ENCODE measurements at regions of chr2 and their contacts with region 1.

Region 1: GRCh38 chr2:196076778-196077568 is 8.3 kb upstream of the DNAH7 start:
- DNase-seq: no peak
- ATAC-seq: no peak
- H3K4me3 Mint-ChIP-seq: no peak overlapping the region
- H3K27ac Mint-ChIP-seq: no peak overlapping the region
- H3K4me1 Mint-ChIP-seq: peaks cover 20% of the 10 kb centered on the region
- H3K27me3 Mint-ChIP-seq: no peaks in the 10 kb centered on the region

Region 2: GRCh38 chr2:196131384-196131937 is 54.5 kb after region 1 on chr2:
- CTCF ChIA-PET with region 1: interaction called, 11 read pairs
- POLR2A ChIA-PET with region 1: no interaction called
- DNase-seq: peak; percentile 81
- ATAC-seq: peak; percentile 55
- H3K4me3 Mint-ChIP-seq: no peak overlapping the region
- H3K27ac Mint-ChIP-seq: peak overlapping the region; percentile 81
- H3K4me1 Mint-ChIP-seq: peaks cover 34% of the 10 kb centered on the region
- H3K27me3 Mint-ChIP-seq: no peaks in the 10 kb centered on the region

Region 3: DNA sequence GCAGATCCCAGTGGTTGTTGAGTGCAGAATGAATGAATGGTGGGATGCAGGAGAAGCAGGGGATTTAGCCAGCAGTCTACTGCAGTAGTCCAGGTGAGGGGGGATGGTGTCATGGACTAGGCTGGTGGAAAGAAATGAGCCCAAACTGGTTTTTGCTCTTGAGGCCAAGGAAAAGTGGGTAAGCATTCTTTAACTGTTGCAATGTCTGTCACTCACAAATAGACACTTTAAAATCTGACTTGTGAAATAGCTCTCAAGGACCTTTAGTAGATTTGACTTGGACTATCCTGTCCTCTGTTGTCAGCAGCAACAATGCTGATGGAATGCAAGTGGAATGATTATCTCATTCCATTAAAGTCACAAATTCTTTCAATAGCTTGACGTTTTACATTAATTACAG is 131.9 kb after region 1 on chr2:
- CTCF ChIA-PET with region 1: no interaction called
- POLR2A ChIA-PET with region 1: no interaction called
- DNase-seq: no peak
- ATAC-seq: no peak
- H3K4me3 Mint-ChIP-seq: no peak overlapping the region
- H3K27ac Mint-ChIP-seq: peak overlapping the region; percentile 77
- H3K4me1 Mint-ChIP-seq: peaks cover 71% of the 10 kb centered on the region
- H3K27me3 Mint-ChIP-seq: no peaks in the 10 kb centered on the region

Region 4: DNA sequence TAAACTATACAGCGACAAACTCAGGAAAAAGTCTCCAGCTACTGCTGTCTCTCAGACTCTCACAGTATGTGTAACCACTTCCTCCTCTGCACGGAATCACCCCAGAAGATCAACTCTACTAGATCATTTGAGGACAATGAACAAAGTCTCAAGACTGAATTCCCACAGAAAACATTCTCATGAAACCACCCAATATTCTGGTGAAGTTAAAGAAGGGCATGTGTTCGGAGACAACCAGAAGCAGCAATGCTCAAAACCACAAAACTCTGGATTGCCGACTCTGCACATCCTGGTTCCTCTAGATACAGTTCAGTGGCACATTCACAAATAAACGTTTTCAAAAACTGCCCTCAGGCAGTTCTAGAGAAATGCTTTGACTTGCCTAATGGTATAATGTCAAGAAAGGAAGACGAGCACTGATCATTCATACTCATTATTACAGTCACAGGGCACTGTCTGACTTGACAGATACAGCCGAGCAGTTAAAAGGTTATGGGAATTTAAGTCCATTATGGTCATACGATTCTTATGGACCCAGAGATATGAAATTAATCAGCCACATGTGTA is 186.3 kb after region 1 on chr2:
- CTCF ChIA-PET with region 1: interaction called, 11 read pairs
- POLR2A ChIA-PET with region 1: no interaction called
- DNase-seq: peak; percentile 74
- ATAC-seq: peak; percentile 73
- H3K4me3 Mint-ChIP-seq: peak overlapping the region; percentile 79
- H3K27ac Mint-ChIP-seq: peak overlapping the region; percentile 92
- H3K4me1 Mint-ChIP-seq: peaks cover 84% of the 10 kb centered on the region
- H3K27me3 Mint-ChIP-seq: no peaks in the 10 kb centered on the region

Region 5: DNA sequence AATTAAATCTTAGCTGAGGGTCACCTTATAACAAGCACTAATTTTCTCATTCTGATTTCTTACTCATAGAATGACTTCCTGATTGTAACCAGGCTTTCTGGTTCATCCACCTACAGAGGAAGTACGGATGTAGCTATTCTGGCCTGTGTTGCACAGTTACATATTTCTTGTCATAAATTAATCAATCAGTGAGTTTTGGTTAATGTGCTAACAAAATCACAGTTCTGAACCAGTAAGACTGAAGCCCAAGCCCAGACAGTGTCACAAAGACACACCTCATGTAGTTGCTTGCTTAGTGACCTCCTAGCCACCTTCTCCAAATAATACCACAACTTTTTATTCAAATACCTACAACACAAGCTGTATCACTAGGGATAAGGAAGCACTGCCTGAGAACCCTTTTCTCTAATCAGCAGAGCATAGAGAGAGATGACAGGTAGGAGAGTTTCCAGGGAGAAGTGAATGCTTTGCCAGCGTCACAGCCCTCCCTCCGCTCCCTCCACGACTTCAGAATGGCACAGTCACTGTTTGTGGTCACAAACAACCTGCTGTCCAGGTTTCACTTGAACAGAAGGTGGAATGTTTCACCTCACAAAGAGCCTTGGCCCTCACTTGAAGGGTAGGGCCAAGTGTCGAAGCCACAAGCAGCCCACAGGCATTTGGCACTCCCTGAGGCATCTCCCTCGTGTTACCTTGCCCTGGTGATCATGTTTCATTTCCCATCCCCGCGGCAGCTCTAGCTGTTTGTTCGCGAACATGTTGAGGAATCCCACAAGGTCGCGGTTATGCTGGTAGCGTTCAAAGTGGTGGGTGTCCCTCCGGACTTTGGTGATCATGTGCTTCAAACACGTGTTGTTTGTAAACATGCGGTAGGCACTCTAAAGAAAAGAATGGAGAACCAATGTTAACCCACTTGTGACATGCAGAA is 215.2 kb after region 1 on chr2:
- CTCF ChIA-PET with region 1: interaction called, 48 read pairs
- POLR2A ChIA-PET with region 1: no interaction called
- DNase-seq: no peak
- ATAC-seq: peak; percentile 20
- H3K4me3 Mint-ChIP-seq: no peak overlapping the region
- H3K27ac Mint-ChIP-seq: peak overlapping the region; percentile 16
- H3K4me1 Mint-ChIP-seq: peaks cover 50% of the 10 kb centered on the region
- H3K27me3 Mint-ChIP-seq: no peaks in the 10 kb centered on the region

Region 6: GRCh38 chr2:196331143-196331542 is 254.2 kb after region 1 on chr2:
- CTCF ChIA-PET with region 1: interaction called, 104 read pairs
- POLR2A ChIA-PET with region 1: no interaction called
- DNase-seq: no peak
- ATAC-seq: no peak
- H3K4me3 Mint-ChIP-seq: no peak overlapping the region
- H3K27ac Mint-ChIP-seq: no peak overlapping the region
- H3K4me1 Mint-ChIP-seq: peaks cover 3% of the 10 kb centered on the region
- H3K27me3 Mint-ChIP-seq: peaks cover 12% of the 10 kb centered on the region

Region 7: GRCh38 chr2:196365923-196366322 is 288.9 kb after region 1 on chr2:
- CTCF ChIA-PET with region 1: interaction called, 11 read pairs
- POLR2A ChIA-PET with region 1: no interaction called
- DNase-seq: no peak
- ATAC-seq: no peak
- H3K4me3 Mint-ChIP-seq: no peak overlapping the region
- H3K27ac Mint-ChIP-seq: peak overlapping the region; percentile 43
- H3K4me1 Mint-ChIP-seq: peaks cover 25% of the 10 kb centered on the region
- H3K27me3 Mint-ChIP-seq: no peaks in the 10 kb centered on the region

Region 8: GRCh38 chr2:196459539-196459938 is 382.6 kb after region 1 on chr2:
- CTCF ChIA-PET with region 1: interaction called, 82 read pairs
- POLR2A ChIA-PET with region 1: no interaction called
- DNase-seq: peak; percentile 31
- ATAC-seq: peak; percentile 42
- H3K4me3 Mint-ChIP-seq: peak overlapping the region; percentile 1
- H3K27ac Mint-ChIP-seq: no peak overlapping the region
- H3K4me1 Mint-ChIP-seq: peaks cover 16% of the 10 kb centered on the region
- H3K27me3 Mint-ChIP-seq: peaks cover 60% of the 10 kb centered on the region

Measured in activated CD8-positive, alpha-beta T cell treated with anti-CD3 and anti-CD28 coated beads, Interleukin-2, amount 10 ng/mL, durations not matched to agents 7 days and 5 days (primary cell).